Natural killer cell (primary cell): ENCODE measurements at regions of chr17 and their contacts with region 1.

Region 1: DNA sequence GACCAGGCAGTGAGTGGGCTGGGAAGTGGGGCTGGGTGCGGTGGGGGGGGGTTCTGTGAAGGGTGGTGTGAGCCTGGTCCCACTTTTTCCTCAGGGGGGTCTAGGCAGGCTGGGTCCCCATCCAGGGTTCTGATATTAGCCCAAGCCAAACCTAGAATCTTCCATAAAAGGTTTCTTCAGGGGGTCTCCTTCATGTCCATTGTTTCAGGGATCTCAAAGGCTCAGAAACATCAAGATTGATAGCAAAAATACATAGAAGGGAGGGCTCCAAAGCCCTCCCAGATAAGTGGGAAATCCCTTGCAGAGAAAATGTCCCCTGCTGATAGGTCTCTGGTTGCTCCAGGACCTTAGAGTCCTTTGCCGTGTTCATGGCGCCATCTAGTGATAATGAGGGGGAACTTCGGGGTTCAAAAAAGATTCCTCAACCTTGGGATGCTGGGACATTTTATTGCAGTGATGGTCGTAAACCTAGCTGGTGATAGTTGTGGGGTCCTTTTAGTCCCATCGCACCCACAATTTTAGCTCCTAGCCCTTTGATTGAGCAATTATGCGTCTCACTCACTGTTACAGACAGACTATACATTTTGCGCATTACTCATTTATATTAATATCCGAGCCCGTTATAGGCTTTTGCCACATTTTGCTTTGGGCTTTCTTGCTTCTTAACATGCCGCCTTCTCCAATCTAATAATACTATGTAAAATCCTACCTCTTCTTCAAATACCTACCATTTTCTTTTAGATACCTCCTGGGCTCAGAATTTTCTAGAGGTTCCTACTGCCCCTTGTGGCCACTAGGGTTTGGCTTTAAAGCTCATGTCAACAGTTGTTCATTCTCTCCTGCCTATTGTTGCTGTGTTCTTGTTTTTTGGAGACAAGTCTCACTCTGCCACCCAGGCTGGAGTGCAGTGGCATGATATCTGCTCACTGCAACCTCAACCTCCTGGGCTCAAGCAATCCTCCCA is 35.1 kb downstream of the IGF2BP1 start:
- DNase-seq: peak in 1 of 2 donors; percentile 73
- ATAC-seq: peak; percentile 70 to 91 (median 89)
- H3K4me3 ChIP-seq: no peak overlapping the region
- H3K4me3 Mint-ChIP-seq: no peak overlapping the region
- H3K27ac ChIP-seq: no peak overlapping the region
- H3K27ac Mint-ChIP-seq: no peak overlapping the region
- H3K4me1 ChIP-seq: no peaks in the 10 kb centered on the region
- H3K4me1 Mint-ChIP-seq: peaks cover 7 to 8% of the 10 kb centered on the region in 2 donors
- H3K27me3 ChIP-seq: no peaks in the 10 kb centered on the region
- H3K27me3 Mint-ChIP-seq: peaks cover 5 to 14% of the 10 kb centered on the region in 2 donors
- CTCF ChIP-seq: peak; percentile 85

Region 2: GRCh38 chr17:48678141-48678971 is 353.9 kb before region 1 on chr17:
- intact Hi-C with region 1: loop called (anchors 1 kb)
- DNase-seq: peak; percentile 75 to 80
- ATAC-seq: peak; percentile 85 to 99 (median 98)
- H3K4me3 ChIP-seq: no peak overlapping the region
- H3K4me3 Mint-ChIP-seq: no peak overlapping the region
- H3K27ac ChIP-seq: no peak overlapping the region
- H3K27ac Mint-ChIP-seq: no peak overlapping the region
- H3K4me1 ChIP-seq: peaks cover 9% of the 10 kb centered on the region
- H3K4me1 Mint-ChIP-seq: peaks cover 0 to 4% of the 10 kb centered on the region in 2 donors
- H3K27me3 ChIP-seq: peaks cover 4% of the 10 kb centered on the region
- H3K27me3 Mint-ChIP-seq: peaks cover 32 to 41% of the 10 kb centered on the region in 2 donors
- CTCF ChIP-seq: peak; percentile 94

Region 3: DNA sequence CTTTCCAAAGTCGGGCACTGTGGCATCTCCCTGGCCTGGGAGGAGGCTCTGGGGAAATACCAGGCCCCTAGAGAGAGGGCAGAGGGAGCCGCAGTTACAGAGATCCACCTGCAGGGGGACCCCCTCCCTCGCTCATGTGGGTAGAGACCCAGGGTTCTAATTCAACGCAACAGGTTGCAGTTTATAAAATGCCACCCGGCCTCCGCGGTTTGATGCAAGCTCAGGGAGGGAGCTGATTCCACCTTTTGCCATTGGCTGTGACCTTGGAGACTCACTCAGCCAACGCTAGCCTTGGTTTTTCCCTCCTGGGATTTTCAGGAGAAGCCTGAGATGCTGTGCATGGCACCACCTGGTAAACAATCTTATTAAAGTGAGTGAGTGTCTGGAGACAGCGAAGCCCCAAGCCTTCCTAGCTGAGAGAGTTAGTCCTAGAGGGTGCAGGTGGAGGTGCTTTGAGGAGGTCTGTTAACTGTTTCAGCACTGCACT is 227.3 kb before region 1 on chr17:
- intact Hi-C with region 1: loop called (anchors 2 kb)
- DNase-seq: peak; percentile 54 to 80
- ATAC-seq: peak; percentile 79 to 97 (median 92)
- H3K4me3 ChIP-seq: no peak overlapping the region
- H3K4me3 Mint-ChIP-seq: no peak overlapping the region
- H3K27ac ChIP-seq: no peak overlapping the region
- H3K27ac Mint-ChIP-seq: no peak overlapping the region
- H3K4me1 ChIP-seq: no peaks in the 10 kb centered on the region
- H3K4me1 Mint-ChIP-seq: peaks cover 0 to 6% of the 10 kb centered on the region in 2 donors
- H3K27me3 ChIP-seq: peaks cover 2% of the 10 kb centered on the region
- H3K27me3 Mint-ChIP-seq: peaks cover 11 to 26% of the 10 kb centered on the region in 2 donors
- CTCF ChIP-seq: peak; percentile 96

Region 4: DNA sequence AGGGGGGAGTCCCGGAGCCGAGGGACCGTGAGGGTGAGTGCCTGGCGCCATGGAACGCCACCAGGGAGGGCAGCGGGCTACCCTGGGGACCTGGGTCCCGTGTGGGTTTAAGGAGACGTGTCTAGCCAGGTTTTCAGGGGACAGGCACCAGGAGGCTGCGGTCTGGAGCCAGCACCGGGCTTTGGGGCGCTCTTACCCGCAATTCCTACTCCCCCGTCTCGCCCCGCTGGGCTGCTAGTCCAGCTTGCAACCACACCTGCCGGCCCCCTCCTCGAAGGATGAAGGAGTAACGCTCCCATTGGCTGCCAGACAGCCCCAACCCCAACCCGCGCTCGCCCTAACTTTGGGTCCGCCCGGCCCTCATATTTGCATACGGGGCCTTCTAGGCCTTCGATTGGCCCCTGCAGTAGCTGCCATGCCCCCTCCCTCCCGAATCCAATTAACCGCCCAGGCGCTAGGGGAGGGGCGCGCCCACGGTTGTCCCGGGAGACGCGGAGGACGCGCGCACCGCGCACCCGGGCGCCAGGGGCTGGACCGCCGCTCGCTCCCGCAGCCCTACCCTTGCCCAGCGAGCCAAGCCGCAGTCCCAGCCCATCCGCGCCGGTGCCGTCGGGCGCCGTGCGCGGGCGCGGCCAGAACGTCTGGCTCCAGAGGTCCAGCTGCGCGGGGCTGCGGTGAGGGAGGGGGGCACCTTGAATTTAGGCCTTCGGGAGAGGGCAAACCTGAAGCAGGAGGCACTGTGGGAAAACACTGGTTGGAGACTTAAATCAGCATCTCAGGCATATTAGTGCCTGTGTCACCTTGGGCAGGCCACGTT is 215.3 kb before region 1 on chr17 and contains the start of gene TTLL6:
- intact Hi-C with region 1: loop called (anchors 2 kb)
- DNase-seq: peak; percentile 66 to 88
- ATAC-seq: peak; percentile 96 to 97 (median 97)
- H3K4me3 ChIP-seq: peak within 1 kb of the TSS; percentile 3
- H3K4me3 Mint-ChIP-seq: peak within 1 kb of the TSS; percentile 61
- H3K27ac ChIP-seq: no peak within 1 kb of the TSS
- H3K27ac Mint-ChIP-seq: peak within 1 kb of the TSS in 1 of 2 donors; percentile 53
- H3K4me1 ChIP-seq: peaks cover 16% of the 10 kb centered on the region
- H3K4me1 Mint-ChIP-seq: peaks cover 10% of the 10 kb centered on the region in 2 donors
- H3K27me3 ChIP-seq: peaks cover 8% of the 10 kb centered on the region
- H3K27me3 Mint-ChIP-seq: peaks cover 20 to 25% of the 10 kb centered on the region in 2 donors
- CTCF ChIP-seq: no peak
- total RNA-seq, gene TTLL6: not detected

Region 5: GRCh38 chr17:48985436-48986245 is 46.6 kb before region 1 on chr17:
- intact Hi-C with region 1: no loop called
- DNase-seq: no peak
- ATAC-seq: no peak
- H3K4me3 ChIP-seq: no peak overlapping the region
- H3K4me3 Mint-ChIP-seq: no peak overlapping the region
- H3K27ac ChIP-seq: no peak overlapping the region
- H3K27ac Mint-ChIP-seq: no peak overlapping the region
- H3K4me1 ChIP-seq: no peaks in the 10 kb centered on the region
- H3K4me1 Mint-ChIP-seq: no peaks in the 10 kb centered on the region
- H3K27me3 ChIP-seq: peaks cover 10% of the 10 kb centered on the region
- H3K27me3 Mint-ChIP-seq: peaks cover 28 to 42% of the 10 kb centered on the region in 2 donors
- CTCF ChIP-seq: no peak

Region 6: DNA sequence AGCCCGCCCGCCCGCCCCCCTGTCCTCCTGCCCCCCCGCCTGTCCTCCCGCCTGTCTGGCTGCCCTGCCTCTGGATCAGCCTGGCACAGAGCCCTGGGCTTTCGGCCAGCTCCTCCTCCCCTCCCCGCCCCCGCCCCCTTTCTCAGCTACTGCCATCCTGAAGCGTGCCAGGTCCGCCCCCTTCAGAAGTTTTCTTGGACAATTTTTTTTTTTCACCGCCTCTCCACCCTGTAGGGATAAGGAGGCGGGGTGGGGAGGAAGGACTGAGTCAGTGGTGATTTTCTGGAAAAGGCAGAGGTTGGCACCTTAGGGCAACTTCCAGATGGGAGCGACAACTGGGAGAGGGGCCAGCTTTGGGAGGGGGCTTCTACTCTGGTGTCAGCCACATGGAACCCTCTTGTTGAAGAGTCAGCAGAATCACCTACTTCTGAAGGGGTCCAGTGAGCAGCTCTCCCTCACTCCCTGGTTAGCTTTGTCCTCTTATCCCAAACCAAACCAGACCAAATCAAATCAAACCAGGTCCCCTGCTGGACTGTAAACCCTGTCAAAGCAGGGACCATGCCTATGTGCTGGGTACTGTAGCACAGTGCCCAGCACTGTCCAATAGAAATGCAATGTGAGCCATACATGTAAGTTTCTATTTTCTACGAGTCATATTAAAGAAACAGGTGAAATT is 15.3 kb before region 1 on chr17:
- intact Hi-C with region 1: no loop called
- DNase-seq: no peak
- ATAC-seq: no peak
- H3K4me3 ChIP-seq: no peak overlapping the region
- H3K4me3 Mint-ChIP-seq: no peak overlapping the region
- H3K27ac ChIP-seq: no peak overlapping the region
- H3K27ac Mint-ChIP-seq: no peak overlapping the region
- H3K4me1 ChIP-seq: peaks cover 5% of the 10 kb centered on the region
- H3K4me1 Mint-ChIP-seq: peaks cover 0 to 5% of the 10 kb centered on the region in 2 donors
- H3K27me3 ChIP-seq: peaks cover 12% of the 10 kb centered on the region
- H3K27me3 Mint-ChIP-seq: peaks cover 28 to 37% of the 10 kb centered on the region in 2 donors
- CTCF ChIP-seq: no peak